Activated naive CD4-positive, alpha-beta T cell treated with anti-CD3 and anti-CD28 coated beads for 36 hours (primary cell): ENCODE measurements at regions of chr13 and their contacts with region 1.

Region 1: DNA sequence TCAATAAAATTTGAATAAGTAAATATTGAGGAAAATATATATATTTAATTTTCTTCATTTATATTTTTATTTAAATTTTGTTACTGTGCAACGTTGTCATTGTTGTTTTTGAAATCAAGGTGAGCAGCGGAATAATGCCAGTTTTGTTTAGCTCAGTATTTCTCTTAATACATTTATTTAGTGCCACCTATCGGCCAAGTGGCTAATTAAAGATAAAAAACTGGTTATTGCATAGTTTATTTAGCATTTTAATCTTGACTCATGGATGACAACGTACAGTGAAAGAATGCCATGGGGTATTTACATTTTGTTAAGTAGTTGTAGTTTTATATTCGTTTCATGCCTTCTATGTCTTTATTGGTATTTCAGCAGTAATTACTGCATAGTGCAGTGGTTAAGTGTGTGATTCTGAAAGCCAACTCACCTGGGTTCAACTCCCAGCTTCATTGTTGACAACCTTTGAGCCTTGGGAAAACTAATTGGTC is 265.9 kb downstream of the MYO16 start:
- DNase-seq: no peak
- H3K4me3 Mint-ChIP-seq: no peak overlapping the region
- H3K27ac Mint-ChIP-seq: no peak overlapping the region
- H3K4me1 Mint-ChIP-seq: peaks cover 8% of the 10 kb centered on the region
- H3K27me3 Mint-ChIP-seq: peaks cover 3% of the 10 kb centered on the region

Region 2: DNA sequence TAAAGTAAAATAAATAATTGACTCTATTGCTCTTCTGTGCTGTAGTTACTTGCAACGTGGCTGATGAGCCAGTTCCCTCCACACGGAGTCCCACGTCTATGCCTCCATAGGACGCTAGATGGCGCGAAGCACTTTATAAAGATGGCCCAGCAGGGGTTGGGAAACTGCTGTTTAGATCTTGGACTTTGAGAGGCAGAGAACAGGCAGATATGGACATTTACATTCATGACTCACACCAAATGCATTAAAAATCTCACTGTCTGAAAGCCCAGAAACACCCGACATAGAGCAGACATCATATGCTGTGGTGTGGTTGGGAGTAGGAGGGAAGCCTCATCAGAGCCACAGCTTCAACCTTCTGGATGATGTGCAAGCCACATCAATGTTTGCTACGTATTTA is 1684.2 kb before region 1 on chr13:
- CTCF ChIA-PET with region 1: no interaction called
- intact Hi-C with region 1: loop called (anchors 5 kb)
- DNase-seq: peak; percentile 71
- H3K4me3 Mint-ChIP-seq: no peak overlapping the region
- H3K27ac Mint-ChIP-seq: no peak overlapping the region
- H3K4me1 Mint-ChIP-seq: no peaks in the 10 kb centered on the region
- H3K27me3 Mint-ChIP-seq: peaks cover 11% of the 10 kb centered on the region

Region 3: GRCh38 chr13:108227651-108228272 is 667.5 kb before region 1 on chr13:
- CTCF ChIA-PET with region 1: interaction called, 3 read pairs
- intact Hi-C with region 1: loop called (anchors 1 kb)
- DNase-seq: peak; percentile 45
- H3K4me3 Mint-ChIP-seq: no peak overlapping the region
- H3K27ac Mint-ChIP-seq: no peak overlapping the region
- H3K4me1 Mint-ChIP-seq: peaks cover 49% of the 10 kb centered on the region
- H3K27me3 Mint-ChIP-seq: no peaks in the 10 kb centered on the region

Region 4: DNA sequence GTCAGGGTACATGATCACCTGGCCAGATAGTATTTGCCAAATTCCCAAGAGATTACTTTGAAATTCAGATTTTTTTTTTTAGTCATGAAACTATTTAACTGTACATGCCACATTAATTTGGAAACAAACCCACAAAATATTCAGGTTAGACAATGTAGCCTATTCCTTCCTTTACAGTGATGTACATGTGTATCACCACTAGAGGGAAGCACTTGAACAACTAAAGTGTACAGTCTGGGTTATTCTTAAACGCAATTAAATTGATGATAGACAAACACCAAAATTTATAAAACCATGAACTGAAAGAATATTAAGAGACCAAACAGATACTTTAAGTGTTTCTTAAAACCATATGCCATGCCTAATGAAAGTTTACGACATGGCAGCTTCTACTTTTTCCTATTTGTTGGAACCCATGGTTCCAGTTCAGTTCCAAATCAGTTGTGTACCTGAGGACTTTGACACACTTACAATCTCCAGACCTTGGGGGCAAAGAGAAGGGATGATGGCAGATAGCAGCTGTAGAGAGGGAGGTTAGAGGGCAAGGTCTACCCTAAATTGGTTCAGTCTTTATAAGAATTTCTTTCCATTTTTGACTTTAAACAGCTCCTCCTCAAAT is 572.9 kb before region 1 on chr13:
- CTCF ChIA-PET with region 1: interaction called, 6 read pairs
- intact Hi-C with region 1: loop called (anchors 1 kb)
- DNase-seq: no peak
- H3K4me3 Mint-ChIP-seq: no peak overlapping the region
- H3K27ac Mint-ChIP-seq: no peak overlapping the region
- H3K4me1 Mint-ChIP-seq: peaks cover 21% of the 10 kb centered on the region
- H3K27me3 Mint-ChIP-seq: no peaks in the 10 kb centered on the region

Region 5: GRCh38 chr13:108508263-108508662 is 387.0 kb before region 1 on chr13:
- CTCF ChIA-PET with region 1: no interaction called
- intact Hi-C with region 1: loop called (anchors 10 kb)
- DNase-seq: no peak
- H3K4me3 Mint-ChIP-seq: no peak overlapping the region
- H3K27ac Mint-ChIP-seq: no peak overlapping the region
- H3K4me1 Mint-ChIP-seq: peaks cover 3% of the 10 kb centered on the region
- H3K27me3 Mint-ChIP-seq: no peaks in the 10 kb centered on the region

Region 6: GRCh38 chr13:108915634-108916512 is 20.6 kb after region 1 on chr13:
- CTCF ChIA-PET with region 1: interaction called, 16 read pairs
- intact Hi-C with region 1: loop called (anchors 1 kb)
- DNase-seq: peak; percentile 98
- H3K4me3 Mint-ChIP-seq: peak overlapping the region; percentile 68
- H3K27ac Mint-ChIP-seq: peak overlapping the region; percentile 87
- H3K4me1 Mint-ChIP-seq: peaks cover 20% of the 10 kb centered on the region
- H3K27me3 Mint-ChIP-seq: peaks cover 8% of the 10 kb centered on the region